ENCODE measurements at regions of chr7 and their contacts with region 1.

Region 1: DNA sequence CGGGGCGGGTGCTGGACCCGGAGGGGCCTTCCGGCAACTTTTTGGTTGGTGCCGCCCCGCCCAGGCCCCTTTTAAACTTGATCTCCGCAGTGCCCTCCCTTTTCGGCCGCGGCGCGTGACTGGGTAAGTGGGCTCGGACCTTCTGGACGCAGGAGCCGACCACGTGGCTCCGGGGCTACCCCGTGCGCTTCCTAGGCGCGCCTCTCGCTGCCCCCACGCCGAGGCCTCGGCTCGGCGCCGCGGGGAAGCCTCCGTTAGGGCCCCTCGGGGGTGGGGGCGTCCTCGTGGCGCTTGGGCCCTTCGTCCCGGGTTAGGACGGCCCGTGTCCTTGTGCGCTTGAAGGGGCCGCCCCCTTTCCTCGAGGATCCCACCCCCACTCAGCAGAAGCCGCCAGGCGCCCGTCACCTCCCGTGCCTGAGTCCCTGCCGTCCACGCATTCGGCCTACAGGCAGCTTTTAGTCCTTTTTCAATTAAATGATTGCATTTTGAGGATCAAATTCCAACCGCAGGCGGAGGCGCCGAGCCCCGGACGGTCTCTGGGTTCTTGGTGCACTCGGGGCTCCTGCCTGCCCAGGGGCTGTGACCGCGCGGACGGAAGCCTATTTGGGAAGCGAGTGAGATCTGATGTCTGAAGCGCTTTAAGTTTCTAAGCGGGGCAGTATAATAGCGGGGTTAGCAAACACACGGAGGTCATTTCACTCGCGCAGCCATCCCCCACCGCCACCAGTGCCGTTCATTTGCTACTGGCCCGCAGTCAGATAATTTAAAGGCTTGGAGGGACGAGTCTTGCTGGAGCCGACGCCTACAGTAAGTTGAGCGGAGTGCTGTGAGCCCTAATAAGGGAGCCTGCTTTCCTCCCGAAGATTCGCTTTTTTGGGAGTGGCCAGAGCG is 31.8 kb upstream of the TOMM7 start:
- DNase-seq: no peak
- H3K4me3 Mint-ChIP-seq: peak overlapping the region; percentile 93
- H3K27ac Mint-ChIP-seq: peak overlapping the region; percentile 93
- H3K4me1 Mint-ChIP-seq: peaks cover 34% of the 10 kb centered on the region
- H3K27me3 Mint-ChIP-seq: peaks cover 2% of the 10 kb centered on the region

Region 2: GRCh38 chr7:22822486-22823141 is 31.8 kb before region 1 on chr7 and contains the start of gene TOMM7:
- CTCF ChIA-PET with region 1: interaction called, 9 read pairs
- POLR2A ChIA-PET with region 1: interaction called, 3 read pairs
- intact Hi-C with region 1: loop called (anchors 1 kb)
- DNase-seq: peak; percentile 92
- H3K4me3 Mint-ChIP-seq: peak within 1 kb of the TSS; percentile 96
- H3K27ac Mint-ChIP-seq: peak within 1 kb of the TSS; percentile 90
- H3K4me1 Mint-ChIP-seq: peaks cover 34% of the 10 kb centered on the region
- H3K27me3 Mint-ChIP-seq: peaks cover 11% of the 10 kb centered on the region
- total RNA-seq, gene TOMM7: 277 to 279 TPM

Region 3: DNA sequence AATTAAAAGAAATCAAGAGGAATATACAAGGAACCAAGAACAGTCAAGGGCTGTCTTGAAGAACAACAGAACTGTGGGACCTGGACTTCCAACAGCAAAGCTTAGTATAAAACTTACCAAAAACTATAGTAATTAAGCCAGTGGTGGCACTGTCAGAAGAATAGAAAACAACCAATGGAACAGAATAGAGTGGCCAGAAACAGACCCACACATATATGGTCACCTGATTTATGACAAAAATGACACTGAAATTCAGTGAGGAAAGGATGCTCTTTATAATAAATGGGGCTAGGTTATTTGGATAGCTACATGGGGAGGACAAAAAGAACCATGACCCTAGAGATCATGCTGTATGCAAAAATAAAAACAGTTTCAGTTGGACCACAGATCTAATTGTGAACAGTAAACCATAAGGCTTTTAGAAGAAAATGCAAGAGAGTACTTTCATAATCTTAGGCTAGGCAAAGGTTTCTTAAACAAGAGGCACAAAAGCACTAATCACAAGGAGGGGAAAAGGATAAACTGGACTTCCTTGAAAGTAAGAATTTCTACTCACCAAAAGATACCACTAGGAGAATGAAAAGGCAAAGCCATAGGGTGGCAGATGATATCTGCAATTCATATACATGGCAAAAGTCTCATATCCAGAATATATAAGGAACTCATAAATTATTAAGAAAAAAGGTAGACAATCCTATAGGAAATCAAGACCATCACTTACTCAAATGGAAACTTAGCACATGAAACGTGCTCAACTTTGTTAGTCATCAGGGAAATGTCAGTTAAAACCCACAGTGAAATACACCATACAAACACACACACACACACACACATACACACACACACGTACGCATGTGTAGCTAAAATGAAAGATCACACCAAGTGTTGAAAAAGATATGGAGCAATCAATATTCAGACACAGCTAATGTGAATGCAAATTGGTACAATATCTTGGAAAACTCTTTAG is 138.8 kb after region 1 on chr7:
- CTCF ChIA-PET with region 1: no interaction called
- POLR2A ChIA-PET with region 1: no interaction called
- intact Hi-C with region 1: loop called (anchors 2 kb)
- DNase-seq: peak; percentile 48
- H3K4me3 Mint-ChIP-seq: no peak overlapping the region
- H3K27ac Mint-ChIP-seq: no peak overlapping the region
- H3K4me1 Mint-ChIP-seq: peaks cover 41% of the 10 kb centered on the region
- H3K27me3 Mint-ChIP-seq: no peaks in the 10 kb centered on the region

Measured in activated CD4-positive, alpha-beta memory T cell treated with anti-CD3 and anti-CD28 coated beads for 36 hours (primary cell).